PC-3 (cell line): ENCODE measurements at regions of chr1 and their contacts with region 1.

Region 1: GRCh38 chr1:86704458-86704971 is at the start of gene SH3GLB1:
- DNase-seq: peak; percentile 87
- ATAC-seq: peak; percentile 88
- H3K4me3 ChIP-seq: peak within 1 kb of the TSS; percentile 92
- H3K27ac ChIP-seq: peak within 1 kb of the TSS; percentile 78
- H3K4me1 ChIP-seq: peaks cover 23% of the 10 kb centered on the region
- H3K27me3 ChIP-seq: no peaks in the 10 kb centered on the region
- CTCF ChIP-seq: peak; percentile 86
- total RNA-seq, gene SH3GLB1: 23.3 and 25.0 TPM in 2 replicates

Region 2: DNA sequence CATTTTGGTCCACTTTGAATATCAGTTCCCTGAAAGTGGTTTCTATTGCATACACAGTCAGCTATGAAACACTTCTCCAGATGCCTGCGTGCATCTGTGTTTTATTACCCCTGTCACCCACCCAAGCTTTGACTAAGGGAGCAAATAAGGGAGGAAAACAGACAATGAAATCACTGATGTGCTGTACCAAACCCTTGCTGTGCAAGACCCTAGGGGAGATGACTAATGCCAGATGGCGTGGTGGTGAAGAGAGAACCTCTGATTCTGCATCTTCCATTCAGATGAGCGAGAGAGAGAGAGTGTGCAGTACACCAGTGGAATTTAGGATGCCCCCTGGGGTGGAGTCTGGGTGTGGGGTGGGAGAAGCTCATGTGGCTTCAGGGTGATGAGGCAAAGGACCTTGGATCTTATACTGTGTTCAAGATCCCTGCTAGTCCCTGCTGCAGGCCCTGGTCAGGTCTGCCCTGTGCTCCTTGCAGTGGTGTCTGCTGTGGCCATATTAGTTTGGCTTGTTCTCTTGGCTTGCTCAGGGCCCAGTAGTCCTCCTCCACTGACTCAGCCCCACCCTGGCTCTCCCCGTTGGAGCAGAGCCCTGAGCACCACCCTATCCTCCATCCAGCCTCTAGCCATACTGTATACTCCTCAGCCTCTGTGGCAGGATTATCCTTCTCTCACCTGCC is 217.2 kb before region 1 on chr1:
- CTCF ChIA-PET with region 1: no interaction called
- POLR2A ChIA-PET with region 1: no interaction called
- intact Hi-C with region 1: no loop called
- DNase-seq: peak; percentile 39
- ATAC-seq: peak; percentile 53
- H3K4me3 ChIP-seq: no peak overlapping the region
- H3K27ac ChIP-seq: no peak overlapping the region
- H3K4me1 ChIP-seq: no peaks in the 10 kb centered on the region
- H3K27me3 ChIP-seq: no peaks in the 10 kb centered on the region
- CTCF ChIP-seq: no peak

Region 3: GRCh38 chr1:86741947-86742572 is 37.5 kb after region 1 on chr1:
- CTCF ChIA-PET with region 1: interaction called, 16 read pairs
- POLR2A ChIA-PET with region 1: no interaction called
- intact Hi-C with region 1: no loop called
- DNase-seq: peak; percentile 66
- ATAC-seq: peak; percentile 27; the same call in 1 of the 2 replicates
- H3K4me3 ChIP-seq: no peak overlapping the region
- H3K27ac ChIP-seq: no peak overlapping the region
- H3K4me1 ChIP-seq: no peaks in the 10 kb centered on the region
- H3K27me3 ChIP-seq: no peaks in the 10 kb centered on the region
- CTCF ChIP-seq: peak; percentile 84

Region 4: GRCh38 chr1:86779308-86780191 is 75.0 kb after region 1 on chr1:
- CTCF ChIA-PET with region 1: no interaction called
- POLR2A ChIA-PET with region 1: interaction called, 12 read pairs
- intact Hi-C with region 1: loop called (anchors 10 kb)
- DNase-seq: peak; percentile 68
- ATAC-seq: peak; percentile 60
- H3K4me3 ChIP-seq: no peak overlapping the region
- H3K27ac ChIP-seq: peak overlapping the region; percentile 26
- H3K4me1 ChIP-seq: peaks cover 32% of the 10 kb centered on the region
- H3K27me3 ChIP-seq: no peaks in the 10 kb centered on the region
- CTCF ChIP-seq: no peak

Region 5: DNA sequence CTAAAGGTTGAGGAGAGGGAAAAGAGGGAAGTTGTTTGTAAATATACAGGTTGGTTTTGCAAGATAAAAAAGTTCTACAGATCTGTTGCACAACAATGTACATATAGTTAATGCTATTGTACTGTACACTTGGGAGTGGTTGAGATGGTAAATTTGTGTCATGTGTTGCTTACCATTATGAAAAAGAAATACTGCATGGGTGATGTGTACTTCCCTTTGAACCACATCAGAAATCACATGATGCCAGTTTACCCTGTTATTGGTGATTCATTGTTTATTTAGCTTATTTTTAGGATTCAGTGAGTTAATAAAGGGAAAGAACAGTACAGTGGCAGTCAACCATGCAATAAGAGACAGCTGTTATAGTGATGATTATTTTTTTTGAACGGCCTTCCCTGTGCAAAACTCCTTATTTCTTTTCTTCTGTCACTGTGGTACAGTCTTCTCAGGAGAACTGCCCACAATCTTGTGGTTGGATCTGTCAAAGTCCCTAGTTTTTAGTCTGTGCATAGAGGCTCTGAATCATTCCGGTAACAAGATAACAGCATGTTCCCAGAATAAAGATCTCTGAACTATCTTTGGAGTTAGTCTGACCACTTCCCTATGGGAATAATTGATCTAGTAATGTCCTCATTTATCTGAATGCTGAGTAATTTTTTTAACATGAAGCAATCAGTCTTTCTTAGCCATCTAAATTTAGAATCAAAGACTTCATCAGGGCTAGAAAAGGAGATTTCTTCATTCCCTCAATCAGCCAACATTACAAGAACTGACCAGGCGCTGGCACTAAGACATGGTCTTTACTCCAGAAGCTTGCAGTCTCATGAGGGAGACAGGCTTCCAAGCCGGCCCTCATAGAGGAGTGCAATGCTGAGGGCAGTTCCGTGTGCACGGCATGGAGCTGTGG is 84.0 kb after region 1 on chr1:
- CTCF ChIA-PET with region 1: no interaction called
- POLR2A ChIA-PET with region 1: no interaction called
- intact Hi-C with region 1: loop called (anchors 10 kb)
- DNase-seq: peak; percentile 79
- ATAC-seq: peak; percentile 74
- H3K4me3 ChIP-seq: no peak overlapping the region
- H3K27ac ChIP-seq: peak overlapping the region; percentile 77
- H3K4me1 ChIP-seq: peaks cover 37% of the 10 kb centered on the region
- H3K27me3 ChIP-seq: no peaks in the 10 kb centered on the region
- CTCF ChIP-seq: no peak